ENCODE measurements at regions of chr10 and their contacts with region 1.

Region 1: GRCh38 chr10:97869091-97870042 is 19.7 kb downstream of the GOLGA7B start:
- DNase-seq: peak; percentile 93
- H3K4me3 Mint-ChIP-seq: no peak overlapping the region
- H3K27ac Mint-ChIP-seq: peak overlapping the region; percentile 17
- H3K4me1 Mint-ChIP-seq: peaks cover 13% of the 10 kb centered on the region
- H3K27me3 Mint-ChIP-seq: peaks cover 19% of the 10 kb centered on the region

Region 2: DNA sequence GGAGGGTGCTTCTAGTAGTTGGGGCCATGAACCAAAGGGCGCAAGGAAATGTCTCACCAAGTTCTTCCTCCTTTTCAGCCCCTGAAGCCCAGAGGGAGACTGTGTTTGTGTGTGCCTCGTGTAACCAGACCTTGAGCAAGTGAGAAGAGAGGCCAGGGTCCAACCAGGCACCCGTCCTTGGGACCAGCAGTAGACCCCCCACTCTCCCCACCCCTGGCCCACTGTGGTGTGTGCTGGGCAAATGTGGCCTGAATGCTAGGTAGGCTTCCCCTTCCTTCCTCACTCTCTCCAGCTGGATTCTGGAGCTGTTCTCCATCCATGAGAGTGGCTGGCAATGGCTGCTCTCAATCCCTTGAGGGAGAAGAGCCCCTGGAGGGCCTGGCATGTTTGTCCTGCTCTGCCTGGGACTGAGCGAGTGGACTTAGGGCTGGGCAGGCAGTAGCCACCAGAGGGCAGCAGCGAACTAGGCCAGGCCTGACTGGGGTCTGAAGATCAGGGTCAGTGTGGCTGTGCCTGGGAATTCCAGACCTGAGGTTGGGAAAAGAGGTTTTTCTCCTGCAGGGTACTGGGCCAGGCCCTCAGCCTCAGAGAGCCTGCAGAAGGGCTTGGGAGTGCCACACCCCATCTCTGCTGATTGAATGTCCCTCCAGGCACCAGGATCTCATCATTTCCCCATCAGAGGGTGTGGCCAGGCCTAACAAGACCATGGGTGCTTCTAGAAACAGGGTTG is 110.0 kb before region 1 on chr10:
- CTCF ChIA-PET with region 1: interaction called, 13 read pairs
- POLR2A ChIA-PET with region 1: no interaction called
- DNase-seq: peak; percentile 50
- H3K4me3 Mint-ChIP-seq: no peak overlapping the region
- H3K27ac Mint-ChIP-seq: no peak overlapping the region
- H3K4me1 Mint-ChIP-seq: no peaks in the 10 kb centered on the region
- H3K27me3 Mint-ChIP-seq: no peaks in the 10 kb centered on the region

Region 3: GRCh38 chr10:97792141-97792721 is 77.1 kb before region 1 on chr10:
- CTCF ChIA-PET with region 1: interaction called, 184 read pairs
- POLR2A ChIA-PET with region 1: interaction called, 12 read pairs
- DNase-seq: peak; percentile 78
- H3K4me3 Mint-ChIP-seq: no peak overlapping the region
- H3K27ac Mint-ChIP-seq: peak overlapping the region; percentile 24
- H3K4me1 Mint-ChIP-seq: peaks cover 33% of the 10 kb centered on the region
- H3K27me3 Mint-ChIP-seq: peaks cover 12% of the 10 kb centered on the region

Region 4: DNA sequence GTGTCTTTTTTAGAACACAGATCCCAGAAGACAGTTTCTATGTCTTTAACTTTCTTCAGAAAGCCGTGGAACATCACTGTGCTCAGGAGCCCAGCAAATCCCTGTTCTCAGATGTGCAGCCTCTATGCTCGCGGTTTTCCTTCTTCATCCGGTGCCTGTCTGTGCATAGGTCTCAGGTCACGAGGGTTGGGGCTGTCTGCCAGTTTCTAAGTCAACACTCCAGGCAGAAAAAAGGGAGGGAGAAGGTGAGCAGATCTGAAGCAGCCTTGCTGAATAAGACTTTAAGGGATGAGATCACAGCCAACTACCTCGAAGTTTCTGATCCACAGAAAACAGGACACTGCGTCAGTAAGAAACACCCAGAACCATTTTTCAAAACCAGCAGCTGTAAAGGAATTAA is 92.6 kb after region 1 on chr10:
- CTCF ChIA-PET with region 1: no interaction called
- POLR2A ChIA-PET with region 1: no interaction called
- DNase-seq: no peak
- H3K4me3 Mint-ChIP-seq: no peak overlapping the region
- H3K27ac Mint-ChIP-seq: no peak overlapping the region
- H3K4me1 Mint-ChIP-seq: no peaks in the 10 kb centered on the region
- H3K27me3 Mint-ChIP-seq: peaks cover 32% of the 10 kb centered on the region